ENCODE measurements at regions of chr1 and their contacts with region 1.

Region 1: DNA sequence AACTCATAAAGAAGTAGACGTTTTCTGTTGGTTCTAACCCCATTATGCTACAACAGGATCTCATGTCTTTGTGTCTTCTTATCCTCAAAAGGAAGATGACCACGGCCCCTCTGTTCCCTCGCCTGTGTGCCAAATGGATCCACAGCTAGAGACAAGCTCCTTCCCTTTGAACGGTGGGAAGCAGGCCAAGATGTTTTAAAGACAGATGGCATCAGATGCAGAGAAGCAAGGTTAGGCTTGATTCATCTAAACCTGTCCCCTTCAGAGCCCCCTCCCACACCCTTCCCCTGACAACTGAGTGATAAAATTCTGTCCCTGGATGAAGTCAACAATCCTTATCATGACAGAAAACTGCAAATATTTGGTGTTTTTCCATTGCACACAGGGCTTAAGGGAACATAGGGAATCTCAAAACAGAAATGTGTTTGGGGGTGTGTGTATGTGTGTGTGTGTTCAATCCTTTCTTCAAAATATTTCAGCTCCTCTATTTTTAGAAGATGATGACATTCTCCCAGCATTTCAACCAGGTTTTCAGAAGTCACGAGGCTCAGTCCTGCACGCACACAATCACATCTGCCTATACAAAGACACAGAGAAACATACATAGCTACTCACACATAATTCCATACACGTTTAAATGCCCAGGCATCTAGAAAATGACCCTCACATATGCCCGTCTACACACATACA is 27.8 kb upstream of the FMOD start:
- DNase-seq: peak; percentile 48 to 73 (median 57)
- H3K4me3 ChIP-seq: no peak overlapping the region
- H3K27ac ChIP-seq: peak overlapping the region; percentile 56 to 86
- H3K4me1 ChIP-seq: peaks cover 41% of the 10 kb centered on the region
- H3K27me3 ChIP-seq: no peaks in the 10 kb centered on the region
- CTCF ChIP-seq: no peak
- EP300 ChIP-seq: peak; percentile 5
- POLR2A ChIP-seq: peak; percentile 35

Region 2: DNA sequence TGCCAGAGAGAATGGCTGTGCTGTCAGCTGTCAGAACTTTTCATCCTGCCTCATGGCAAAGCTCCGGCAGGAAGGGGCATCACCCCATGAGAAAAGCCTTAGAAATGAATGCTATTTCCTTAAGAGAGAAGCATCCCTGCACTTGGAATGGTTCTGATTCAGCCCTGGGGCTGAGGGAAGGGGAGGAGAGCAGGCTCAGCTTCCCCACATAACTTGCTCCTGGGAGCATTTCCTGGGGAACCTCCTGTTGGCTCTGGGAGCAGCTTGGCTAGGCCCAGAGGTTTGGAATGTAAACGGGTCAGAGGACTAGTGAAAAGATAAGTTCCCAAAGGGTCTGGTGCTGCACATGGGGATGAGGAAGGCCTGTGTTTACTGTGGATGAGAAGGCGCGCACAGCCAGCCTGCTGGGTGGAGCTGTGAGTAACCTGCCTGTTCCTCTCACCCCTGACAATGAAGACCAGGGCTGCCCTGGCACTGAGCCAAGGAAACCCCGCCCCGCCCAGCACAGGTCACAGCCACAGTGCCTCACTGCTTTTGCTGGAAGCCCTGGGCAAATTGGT is 101.9 kb after region 1 on chr1:
- intact Hi-C with region 1: loop called in 1 of 4 experiments (anchors 10 kb)
- DNase-seq: peak; percentile 81 to 87 (median 85)
- H3K4me3 ChIP-seq: peak overlapping the region; percentile 62
- H3K27ac ChIP-seq: peak overlapping the region; percentile 77 to 88
- H3K4me1 ChIP-seq: peaks cover 20% of the 10 kb centered on the region
- H3K27me3 ChIP-seq: no peaks in the 10 kb centered on the region
- CTCF ChIP-seq: no peak
- EP300 ChIP-seq: no peak
- POLR2A ChIP-seq: no peak